ENCODE measurements at regions of chr12 and their contacts with region 1.

Region 1: DNA sequence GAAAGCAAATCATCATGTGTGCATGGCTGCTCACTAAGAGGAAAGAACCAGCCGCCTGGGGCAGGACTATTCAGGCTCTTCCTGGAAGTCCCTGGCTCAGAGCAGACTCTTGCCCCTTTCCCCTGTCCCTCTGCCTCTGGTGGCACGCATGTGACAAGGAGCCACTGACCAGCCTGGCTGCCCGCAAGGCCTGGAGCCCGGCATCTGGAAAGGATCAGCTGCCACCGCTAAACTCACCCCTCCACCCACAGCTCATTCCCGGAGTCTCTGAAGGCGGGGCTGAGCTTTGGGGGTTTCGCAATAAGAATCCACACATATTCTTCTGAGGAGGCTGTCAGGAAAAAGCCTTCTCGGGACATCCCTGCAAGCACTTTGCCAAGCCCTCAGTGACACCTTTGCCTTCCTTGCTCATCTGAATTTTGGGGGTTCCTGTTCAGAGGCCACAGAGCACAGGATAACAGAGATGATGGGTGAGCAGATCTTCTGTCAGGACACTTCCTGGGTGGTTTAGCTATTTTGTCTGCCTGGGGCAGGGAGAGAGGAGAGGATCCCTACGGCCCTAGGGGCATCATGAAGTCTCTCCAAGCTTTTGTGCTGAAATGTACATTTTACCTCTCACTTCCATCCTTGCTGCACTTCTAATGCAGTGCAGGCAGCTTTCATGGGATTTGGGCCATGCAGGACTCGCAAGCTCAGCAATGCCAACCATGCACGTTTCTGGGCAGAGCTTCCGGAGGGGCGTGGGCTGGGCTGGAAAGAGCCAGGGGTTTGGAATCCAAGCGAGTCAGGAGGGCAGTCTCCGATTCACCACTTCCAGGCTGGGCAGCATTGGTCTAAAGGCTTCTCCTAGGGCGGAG is 124.8 kb upstream of the MAP1LC3B2 start:
- DNase-seq: peak; percentile 83 to 97
- H3K4me3 ChIP-seq: peak overlapping the region; percentile 24 to 56
- H3K27ac ChIP-seq: peak overlapping the region; percentile 67 to 74
- H3K4me1 ChIP-seq: peaks cover 4 to 12% of the 10 kb centered on the region in 2 donors
- H3K27me3 ChIP-seq: no peaks in the 10 kb centered on the region
- CTCF ChIP-seq: no peak

Region 2: GRCh38 chr12:116325336-116325664 is 109.1 kb before region 1 on chr12:
- intact Hi-C with region 1: no loop called
- DNase-seq: no peak
- H3K4me3 ChIP-seq: no peak overlapping the region
- H3K27ac ChIP-seq: peak overlapping the region; percentile 13 to 41
- H3K4me1 ChIP-seq: peaks cover 4 to 14% of the 10 kb centered on the region in 2 donors
- H3K27me3 ChIP-seq: no peaks in the 10 kb centered on the region
- CTCF ChIP-seq: no peak

Region 3: DNA sequence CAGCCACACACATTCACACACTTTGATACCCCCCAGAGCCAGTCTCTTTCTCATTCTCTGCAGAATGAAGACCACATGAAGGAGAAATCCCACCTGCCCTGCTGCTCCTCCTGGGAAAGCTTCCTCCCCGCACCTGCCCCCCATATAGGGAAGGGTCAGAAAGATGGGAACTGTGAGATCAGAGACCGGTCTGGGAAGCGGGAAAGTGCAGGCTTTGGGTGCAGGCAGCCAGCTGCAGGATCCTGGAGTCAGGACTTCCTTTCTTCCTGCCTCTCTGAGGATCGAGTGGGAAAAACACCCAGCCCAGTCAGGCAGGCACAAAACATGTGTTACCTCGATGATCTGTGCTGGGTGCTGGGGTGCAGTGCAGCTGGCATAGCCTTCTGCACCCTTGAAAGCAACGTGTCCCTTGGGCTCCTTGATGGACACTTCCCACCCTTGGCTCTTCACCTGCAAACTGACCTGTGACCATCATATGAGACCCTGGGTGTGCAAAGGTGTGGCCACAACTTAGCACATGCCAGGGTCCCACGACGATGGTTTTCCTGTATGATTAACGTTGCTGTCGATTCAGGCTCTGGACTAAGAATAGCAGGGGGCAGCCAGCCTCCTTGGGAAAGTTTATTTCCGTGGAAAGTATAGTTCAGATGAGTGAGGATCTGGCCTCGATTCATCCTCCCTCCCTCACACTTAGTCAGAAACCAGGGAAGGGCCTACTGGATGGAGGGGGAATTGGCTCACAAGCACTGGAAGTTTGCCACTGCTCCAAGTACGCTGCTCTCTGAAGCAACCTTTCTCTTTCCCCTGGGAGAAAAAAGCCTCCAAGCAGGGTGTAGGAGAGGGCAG is 51.5 kb before region 1 on chr12:
- intact Hi-C with region 1: loop called (anchors 2 kb)
- DNase-seq: peak; percentile 44 to 95
- H3K4me3 ChIP-seq: peak overlapping the region in 1 of 2 donors; percentile 24
- H3K27ac ChIP-seq: peak overlapping the region; percentile 73 to 81
- H3K4me1 ChIP-seq: peaks cover 12 to 32% of the 10 kb centered on the region in 2 donors
- H3K27me3 ChIP-seq: no peaks in the 10 kb centered on the region
- CTCF ChIP-seq: no peak

Region 4: GRCh38 chr12:116609319-116610114 is 175.1 kb after region 1 on chr12:
- intact Hi-C with region 1: no loop called
- DNase-seq: no peak
- H3K4me3 ChIP-seq: no peak overlapping the region
- H3K27ac ChIP-seq: no peak overlapping the region
- H3K4me1 ChIP-seq: no peaks in the 10 kb centered on the region
- H3K27me3 ChIP-seq: no peaks in the 10 kb centered on the region
- CTCF ChIP-seq: peak in 2 of 3 experiments; percentile 7 to 29

Measured in ascending aorta (tissue), 2 donors.